AG04450 (cell line): ENCODE measurements at regions of chr14 and their contacts with region 1.

Region 1: DNA sequence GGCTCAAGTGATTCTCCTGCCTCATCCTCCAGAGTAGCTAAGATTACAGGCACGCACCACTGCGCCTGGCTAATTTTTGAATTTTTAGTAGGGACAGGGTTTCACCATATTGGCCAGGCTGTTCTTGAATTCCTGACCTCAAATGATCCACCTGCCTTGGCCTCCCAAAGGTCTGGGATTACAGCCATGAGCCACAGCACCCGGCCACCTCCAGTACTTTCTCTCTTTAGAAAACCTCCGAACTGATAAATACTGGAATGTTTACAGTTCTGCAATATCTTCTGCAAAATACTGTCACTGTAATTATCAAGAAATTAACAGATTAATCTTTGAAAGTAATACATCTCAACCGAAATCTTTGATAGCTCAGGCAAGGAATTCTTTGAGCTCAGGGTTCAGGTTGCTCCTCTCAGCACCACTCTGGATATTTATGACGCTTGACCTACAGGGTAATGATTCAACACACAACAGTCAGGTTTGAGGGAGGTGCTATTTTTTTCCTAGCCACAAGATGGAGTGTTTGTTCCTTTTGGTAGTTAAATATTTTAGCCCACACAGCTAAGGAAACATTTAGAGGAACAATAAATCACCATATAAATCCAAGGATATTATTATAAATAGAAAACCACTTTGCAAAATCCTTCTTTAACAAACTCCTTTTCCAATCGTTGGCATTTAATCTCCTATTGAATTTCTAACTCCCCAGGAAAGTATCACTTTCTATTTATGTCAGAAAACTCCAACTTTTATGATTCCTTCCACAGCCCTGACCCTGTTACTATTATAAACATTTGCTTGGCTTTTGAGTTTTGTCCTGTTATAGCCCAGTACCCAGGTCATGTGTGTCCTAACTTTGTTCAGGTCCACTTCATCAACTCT is 48.6 kb upstream of the GTF2A1 start:
- DNase-seq: peak; percentile 39
- H3K4me3 ChIP-seq: no peak overlapping the region
- H3K27ac ChIP-seq: no peak overlapping the region
- H3K27me3 ChIP-seq: peaks cover 4% of the 10 kb centered on the region
- CTCF ChIP-seq: peak; percentile 76

Region 2: DNA sequence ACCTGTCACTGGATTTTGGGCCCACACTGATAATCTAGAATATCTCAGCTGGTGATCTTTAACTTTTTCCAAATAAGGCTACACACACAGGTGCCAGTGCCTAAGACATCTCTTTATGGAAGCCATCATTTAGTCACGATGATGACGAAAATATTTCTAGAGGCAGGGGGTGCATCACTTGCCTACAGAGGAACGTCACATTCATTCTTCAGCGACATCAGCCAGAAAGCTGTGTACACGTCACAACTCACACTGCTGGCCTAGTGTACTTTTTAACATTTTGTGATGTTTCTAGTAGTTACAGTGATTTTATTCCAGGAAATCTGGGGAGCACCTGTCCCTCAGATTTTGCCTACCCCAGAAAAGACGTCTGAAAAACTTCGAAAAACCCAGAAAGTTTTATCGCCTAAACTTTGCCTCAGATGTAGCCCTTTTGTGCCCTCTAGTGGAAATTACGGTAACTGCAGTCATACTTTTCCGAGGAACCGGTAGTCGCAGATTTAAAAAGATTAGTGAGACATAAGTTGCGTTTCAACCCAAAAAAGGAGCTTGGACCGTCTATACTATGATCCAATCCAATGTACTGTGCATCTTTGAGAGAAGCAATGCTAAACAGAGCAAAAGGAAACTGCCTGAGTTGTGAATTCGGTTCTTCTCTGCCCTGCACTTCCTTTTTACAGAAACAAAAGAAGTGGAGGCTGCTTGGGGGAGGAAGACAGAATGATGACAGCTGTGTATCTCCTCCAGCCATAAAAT is 195.1 kb after region 1 on chr14:
- CTCF ChIA-PET with region 1: interaction called, 156 read pairs
- POLR2A ChIA-PET with region 1: no interaction called
- DNase-seq: peak; percentile 30
- H3K4me3 ChIP-seq: peak overlapping the region; percentile 62
- H3K27ac ChIP-seq: no peak overlapping the region
- H3K27me3 ChIP-seq: no peaks in the 10 kb centered on the region
- CTCF ChIP-seq: peak; percentile 88

Region 3: DNA sequence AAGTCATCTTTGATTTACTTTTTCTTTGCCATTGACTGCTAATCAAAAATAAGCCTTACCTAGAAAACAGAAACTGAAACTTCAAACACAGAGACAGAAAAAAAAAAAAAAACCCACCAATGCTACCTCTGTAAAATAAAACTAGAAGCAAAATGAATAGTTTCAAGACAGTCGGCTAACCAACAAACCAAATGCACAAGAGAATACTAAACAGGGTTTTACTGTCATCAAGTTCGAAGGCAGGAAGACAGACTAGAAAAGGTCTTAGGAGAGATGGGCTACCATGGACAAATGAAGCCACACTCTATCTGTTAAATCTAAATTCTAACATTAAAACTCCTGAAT is 204.8 kb after region 1 on chr14:
- CTCF ChIA-PET with region 1: interaction called, 21 read pairs
- POLR2A ChIA-PET with region 1: no interaction called
- DNase-seq: no peak
- H3K4me3 ChIP-seq: no peak overlapping the region
- H3K27ac ChIP-seq: no peak overlapping the region
- H3K27me3 ChIP-seq: no peaks in the 10 kb centered on the region
- CTCF ChIP-seq: no peak